OCI-LY7 (cell line): ENCODE measurements at regions of chr6 and their contacts with region 1.

Region 1: DNA sequence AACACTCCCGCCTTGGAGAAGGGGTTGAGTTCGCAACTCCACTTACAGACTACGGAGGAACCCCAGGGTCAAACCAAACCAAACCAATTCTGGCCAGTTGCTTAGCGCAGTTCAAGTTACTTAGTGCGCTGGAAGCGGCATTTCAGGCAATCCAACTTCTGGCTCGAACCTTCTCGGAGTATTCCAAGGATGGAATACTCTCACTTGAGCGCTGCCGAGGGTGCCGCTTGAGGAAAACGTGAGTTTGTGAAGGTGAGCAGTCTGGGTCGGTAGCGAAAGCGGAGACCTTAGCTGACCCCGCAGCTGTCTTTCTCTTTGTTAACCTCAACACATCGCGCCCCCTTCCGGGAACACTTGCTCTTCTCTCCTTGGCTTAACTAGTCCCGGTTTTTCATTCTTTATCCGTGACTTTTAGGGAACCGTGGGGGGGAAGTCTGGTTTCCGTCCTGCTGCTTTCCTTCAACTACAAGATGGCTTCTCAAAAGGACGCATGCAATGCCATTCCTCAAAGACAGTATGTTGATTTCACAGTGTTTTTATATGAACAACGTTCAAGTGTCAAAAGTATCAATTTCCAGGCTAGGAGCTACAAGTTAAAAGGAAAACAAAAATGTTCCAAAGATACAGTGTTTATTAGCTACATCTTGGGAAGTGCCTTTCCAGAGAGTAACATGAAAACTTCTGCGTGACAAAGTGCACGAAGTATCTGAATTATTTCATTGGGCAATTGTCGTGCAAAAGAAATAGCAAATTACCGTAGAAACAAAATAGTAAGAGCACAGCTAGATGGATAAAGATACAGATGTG is 742 bp upstream of the PNISR start:
- DNase-seq: peak; percentile 83
- H3K4me3 ChIP-seq: peak overlapping the region; percentile 80
- H3K27ac ChIP-seq: peak overlapping the region; percentile 91
- H3K4me1 ChIP-seq: peaks cover 42% of the 10 kb centered on the region
- CTCF ChIP-seq: peak; percentile 73

Region 2: GRCh38 chr6:99330159-99330558 is 95.7 kb before region 1 on chr6:
- CTCF ChIA-PET with region 1: no interaction called
- POLR2A ChIA-PET with region 1: interaction called, 4 read pairs
- intact Hi-C with region 1: loop called (anchors 5 kb)
- DNase-seq: peak; percentile 72
- H3K4me3 ChIP-seq: no peak overlapping the region
- H3K27ac ChIP-seq: no peak overlapping the region
- H3K4me1 ChIP-seq: no peaks in the 10 kb centered on the region
- CTCF ChIP-seq: peak; percentile 89

Region 3: GRCh38 chr6:99393698-99394531 is 31.9 kb before region 1 on chr6 and contains the start of gene COQ3:
- CTCF ChIA-PET with region 1: no interaction called
- POLR2A ChIA-PET with region 1: interaction called, 23 read pairs
- intact Hi-C with region 1: no loop called
- DNase-seq: peak; percentile 74
- H3K4me3 ChIP-seq: peak within 1 kb of the TSS; percentile 74
- H3K27ac ChIP-seq: peak within 1 kb of the TSS; percentile 74
- H3K4me1 ChIP-seq: peaks cover 4% of the 10 kb centered on the region
- CTCF ChIP-seq: no peak
- total RNA-seq, gene COQ3: 3.7 and 8.3 TPM in 2 replicates

Region 4: DNA sequence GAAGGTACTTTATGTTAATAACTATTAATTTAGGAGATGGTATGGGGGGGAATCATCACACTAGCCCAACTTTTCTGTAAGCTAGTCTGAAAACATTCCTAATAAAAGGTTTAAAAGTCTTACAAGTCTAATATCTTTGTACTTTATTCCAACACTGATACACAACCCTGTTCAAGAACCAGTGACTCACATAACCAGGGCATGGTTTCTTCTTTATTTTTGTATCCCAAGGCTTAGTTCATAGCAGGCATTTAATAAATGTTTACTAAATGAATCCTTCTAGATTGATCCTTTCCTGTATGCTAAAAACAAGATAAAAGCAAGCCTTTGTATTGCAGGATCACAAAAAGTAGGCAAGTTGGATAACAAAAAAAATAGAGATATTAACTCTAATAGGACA is 10.4 kb before region 1 on chr6:
- CTCF ChIA-PET with region 1: no interaction called
- POLR2A ChIA-PET with region 1: interaction called, 15 read pairs
- intact Hi-C with region 1: no loop called
- DNase-seq: no peak
- H3K4me3 ChIP-seq: no peak overlapping the region
- H3K27ac ChIP-seq: no peak overlapping the region
- H3K4me1 ChIP-seq: peaks cover 18% of the 10 kb centered on the region
- CTCF ChIP-seq: no peak

Region 5: DNA sequence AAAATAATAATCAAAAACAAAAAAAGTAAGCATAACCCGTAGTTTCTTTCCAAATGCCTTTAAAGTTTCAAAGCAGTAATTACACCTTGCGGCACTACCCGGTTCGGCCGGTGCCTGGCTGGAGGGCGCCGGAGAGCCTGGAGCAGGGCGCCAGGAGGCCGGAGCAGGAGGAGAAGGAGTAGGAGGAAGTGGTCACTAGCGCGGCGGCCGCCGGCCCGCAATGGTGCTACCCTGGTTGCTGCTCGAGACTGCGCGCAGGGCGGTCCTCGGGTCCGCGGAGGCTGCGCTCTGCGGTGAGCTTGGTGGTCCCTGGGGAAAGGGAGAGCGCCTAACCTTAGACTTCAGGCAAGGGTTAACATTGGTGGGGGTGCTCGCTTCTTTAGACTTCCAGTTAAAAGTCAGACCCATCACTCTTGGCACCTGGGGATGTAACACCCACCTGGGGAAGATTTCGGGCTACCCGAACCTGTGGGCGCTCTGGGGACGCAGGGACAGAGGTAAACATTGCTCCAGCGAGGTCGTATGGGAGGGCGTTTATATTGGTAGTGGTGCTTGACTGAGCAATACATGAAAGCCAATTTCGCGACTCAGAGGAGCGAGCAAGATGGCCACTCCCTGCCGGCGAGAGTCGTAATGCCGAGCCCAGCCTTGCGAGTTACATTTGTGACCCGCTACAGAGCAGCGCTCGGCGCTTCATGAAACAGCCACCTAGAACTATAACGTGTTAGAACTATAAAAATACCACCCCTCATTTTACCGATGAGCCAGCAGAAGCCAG is 95.2 kb after region 1 on chr6:
- CTCF ChIA-PET with region 1: no interaction called
- POLR2A ChIA-PET with region 1: interaction called, 3 read pairs
- intact Hi-C with region 1: loop called (anchors 2 kb)
- DNase-seq: peak; percentile 81
- H3K4me3 ChIP-seq: peak overlapping the region; percentile 82
- H3K27ac ChIP-seq: peak overlapping the region; percentile 60
- H3K4me1 ChIP-seq: peaks cover 19% of the 10 kb centered on the region
- CTCF ChIP-seq: peak; percentile 88

Region 6: GRCh38 chr6:99629293-99629692 is 203.4 kb after region 1 on chr6:
- CTCF ChIA-PET with region 1: no interaction called
- POLR2A ChIA-PET with region 1: no interaction called
- intact Hi-C with region 1: no loop called
- DNase-seq: no peak
- H3K4me3 ChIP-seq: no peak overlapping the region
- H3K27ac ChIP-seq: no peak overlapping the region
- H3K4me1 ChIP-seq: no peaks in the 10 kb centered on the region
- CTCF ChIP-seq: no peak